Calu3 (cell line): ENCODE measurements at regions of chr10 and their contacts with region 1.

Region 1: DNA sequence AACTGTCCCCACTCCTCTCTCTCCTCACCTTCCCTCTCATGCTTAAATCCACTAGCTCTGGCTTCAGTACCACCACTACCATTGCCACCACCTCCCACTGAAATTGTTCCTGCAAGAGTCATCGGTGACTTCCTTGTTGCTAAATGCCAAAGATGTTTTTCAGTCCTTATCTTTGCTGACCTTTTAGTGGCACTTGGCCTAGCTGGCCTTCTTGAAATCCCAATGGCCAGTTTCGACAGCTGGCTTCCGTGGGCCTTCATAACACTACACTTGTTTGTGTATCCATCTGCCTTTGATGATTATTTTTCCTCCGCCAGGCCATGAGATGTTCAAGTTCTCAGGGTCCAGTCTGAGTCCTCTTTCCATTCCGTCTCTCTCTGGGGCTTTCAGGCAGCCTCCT is 118.2 kb upstream of the NANOS1 start:
- DNase-seq: peak; percentile 43
- H3K4me3 Mint-ChIP-seq: no peak overlapping the region
- H3K27ac Mint-ChIP-seq: peak overlapping the region; percentile 23
- H3K4me1 Mint-ChIP-seq: peaks cover 52% of the 10 kb centered on the region
- H3K27me3 Mint-ChIP-seq: no peaks in the 10 kb centered on the region
- CTCF ChIP-seq: no peak

Region 2: DNA sequence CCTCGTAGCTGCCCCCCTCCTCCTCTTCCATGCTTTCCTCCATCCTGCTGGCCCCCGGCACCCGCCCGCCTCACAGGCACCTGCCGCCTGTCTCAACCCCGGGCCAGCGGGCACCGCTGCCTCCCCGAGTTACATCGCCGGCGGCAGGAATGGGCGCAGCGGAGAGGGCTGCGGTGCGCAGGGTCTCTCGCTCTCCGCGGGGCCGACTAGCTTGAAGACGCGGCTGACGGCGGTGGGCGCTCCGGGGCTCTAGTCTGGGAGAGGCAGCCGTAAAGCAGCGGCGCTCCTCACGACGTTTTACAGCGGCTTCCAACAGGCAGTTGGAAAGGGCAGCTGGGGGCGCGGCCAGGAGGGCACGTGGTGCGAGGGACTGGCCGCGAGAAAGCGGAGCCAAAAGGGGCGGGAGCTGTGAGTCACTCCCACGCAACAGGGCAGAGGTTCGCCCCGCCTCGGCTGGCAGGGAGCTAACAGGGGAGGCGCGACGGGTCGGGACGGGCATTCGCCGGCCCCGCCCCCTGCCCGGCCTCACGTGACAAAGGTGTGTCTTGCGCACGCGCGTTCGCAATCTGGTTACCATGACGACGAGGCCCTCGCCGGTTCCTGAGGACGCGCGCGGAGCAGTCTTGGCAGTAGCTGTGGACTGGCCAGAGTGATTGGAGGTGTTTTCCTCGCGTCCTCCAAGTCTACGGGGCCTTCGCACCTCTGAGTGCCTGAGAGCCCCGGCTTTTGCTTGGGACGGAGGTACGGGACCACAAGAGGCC is 156.5 kb before region 1 on chr10 and contains the start of gene CACUL1:
- CTCF ChIA-PET with region 1: no interaction called
- intact Hi-C with region 1: loop called (anchors 10 kb)
- DNase-seq: peak; percentile 98
- H3K4me3 Mint-ChIP-seq: peak within 1 kb of the TSS; percentile 82
- H3K27ac Mint-ChIP-seq: peak within 1 kb of the TSS; percentile 88
- H3K4me1 Mint-ChIP-seq: peaks cover 16% of the 10 kb centered on the region
- H3K27me3 Mint-ChIP-seq: no peaks in the 10 kb centered on the region
- CTCF ChIP-seq: no peak
- total RNA-seq, gene CACUL1: 38.3 and 44.6 TPM in 2 replicates

Region 3: DNA sequence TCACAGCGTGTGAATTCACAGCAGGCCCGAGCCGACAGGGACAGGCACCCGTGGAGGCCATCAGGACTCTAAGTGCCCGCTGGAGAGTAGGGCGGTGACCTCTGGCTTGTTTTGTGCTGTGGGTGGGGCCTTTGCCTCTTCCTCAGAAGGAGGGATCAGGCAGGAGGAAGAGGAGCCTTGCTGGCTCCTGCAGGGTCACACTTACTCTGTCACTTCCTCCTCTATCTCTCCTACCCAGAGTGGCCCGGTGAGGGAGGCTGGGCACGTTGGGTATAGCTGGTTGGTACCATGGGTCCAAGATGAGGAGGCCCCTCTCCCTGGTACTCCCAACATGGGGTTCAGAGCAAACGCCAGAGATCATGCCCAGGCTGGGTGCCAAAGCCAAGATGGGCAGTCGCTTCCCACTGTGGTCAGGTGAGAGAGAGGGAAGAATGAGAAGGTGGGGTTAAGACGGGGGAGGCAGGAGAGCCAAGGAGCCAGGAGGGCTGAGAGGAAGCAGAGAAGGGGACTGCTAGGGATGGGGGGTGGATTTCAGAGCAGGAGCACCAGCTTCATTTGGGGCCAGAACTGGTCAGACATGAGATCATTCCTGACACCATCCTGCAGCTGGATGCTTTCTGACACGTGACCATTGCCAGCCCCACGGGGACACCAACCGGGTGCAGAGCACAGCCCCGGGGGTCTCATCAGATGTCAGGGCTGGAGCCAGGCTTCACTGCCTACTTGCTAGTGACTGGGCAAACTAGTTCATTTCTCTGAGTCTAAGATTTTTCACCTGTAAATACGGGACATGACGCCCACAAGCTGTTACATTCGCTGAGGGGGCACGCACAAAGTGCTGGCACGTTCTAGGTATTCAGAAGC is 101.8 kb before region 1 on chr10:
- CTCF ChIA-PET with region 1: no interaction called
- intact Hi-C with region 1: no loop called
- DNase-seq: no peak
- H3K4me3 Mint-ChIP-seq: no peak overlapping the region
- H3K27ac Mint-ChIP-seq: no peak overlapping the region
- H3K4me1 Mint-ChIP-seq: no peaks in the 10 kb centered on the region
- H3K27me3 Mint-ChIP-seq: peaks cover 5% of the 10 kb centered on the region
- CTCF ChIP-seq: no peak